Endothelial cell of umbilical vein (primary cell): ENCODE measurements at regions of chr2 and their contacts with region 1.

Region 1: GRCh38 chr2:190250421-190250820 is 69.2 kb downstream of the HIBCH start:
- DNase-seq: peak; percentile 22
- H3K4me3 ChIP-seq: no peak overlapping the region
- H3K27ac ChIP-seq: no peak overlapping the region
- H3K4me1 ChIP-seq: peaks cover 6% of the 10 kb centered on the region
- H3K27me3 ChIP-seq: no peaks in the 10 kb centered on the region
- CTCF ChIP-seq: no peak
- POLR2A ChIP-seq: no peak

Region 2: DNA sequence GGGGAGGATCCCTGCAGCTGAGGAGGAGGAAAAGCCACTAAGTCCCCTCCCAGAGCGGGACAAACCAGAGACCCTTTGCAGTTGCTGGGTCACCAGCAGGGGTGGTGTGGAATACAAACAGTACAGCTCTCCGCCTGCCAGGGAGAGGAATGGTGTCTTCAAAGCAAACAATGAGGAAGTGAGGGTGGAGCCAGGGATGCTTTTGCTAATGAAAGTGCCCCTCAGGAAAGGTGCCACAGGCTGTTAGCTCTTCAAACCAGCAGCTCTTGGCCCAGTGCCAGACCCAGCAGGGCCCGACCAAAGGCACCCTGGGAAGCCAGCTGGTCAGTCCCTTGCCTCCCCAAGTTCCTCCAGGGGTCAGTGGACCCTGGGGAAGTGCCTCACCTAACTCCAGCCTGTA is 33.6 kb before region 1 on chr2:
- CTCF ChIA-PET with region 1: no interaction called
- POLR2A ChIA-PET with region 1: no interaction called
- dilution Hi-C with region 1: no loop called
- intact Hi-C with region 1: loop called (anchors 1 kb)
- DNase-seq: peak; percentile 11
- H3K4me3 ChIP-seq: no peak overlapping the region
- H3K27ac ChIP-seq: no peak overlapping the region
- H3K4me1 ChIP-seq: peaks cover 2% of the 10 kb centered on the region
- H3K27me3 ChIP-seq: no peaks in the 10 kb centered on the region
- CTCF ChIP-seq: no peak
- POLR2A ChIP-seq: no peak

Region 3: GRCh38 chr2:190235101-190235500 is 15.3 kb before region 1 on chr2:
- CTCF ChIA-PET with region 1: no interaction called
- POLR2A ChIA-PET with region 1: no interaction called
- dilution Hi-C with region 1: no loop called
- intact Hi-C with region 1: no loop called
- DNase-seq: no peak
- H3K4me3 ChIP-seq: no peak overlapping the region
- H3K27ac ChIP-seq: no peak overlapping the region
- H3K4me1 ChIP-seq: no peaks in the 10 kb centered on the region
- H3K27me3 ChIP-seq: no peaks in the 10 kb centered on the region
- CTCF ChIP-seq: no peak
- POLR2A ChIP-seq: no peak